Naive thymus-derived CD4-positive, alpha-beta T cell (primary cell): ENCODE measurements at regions of chr2 and their contacts with region 1.

Region 1: DNA sequence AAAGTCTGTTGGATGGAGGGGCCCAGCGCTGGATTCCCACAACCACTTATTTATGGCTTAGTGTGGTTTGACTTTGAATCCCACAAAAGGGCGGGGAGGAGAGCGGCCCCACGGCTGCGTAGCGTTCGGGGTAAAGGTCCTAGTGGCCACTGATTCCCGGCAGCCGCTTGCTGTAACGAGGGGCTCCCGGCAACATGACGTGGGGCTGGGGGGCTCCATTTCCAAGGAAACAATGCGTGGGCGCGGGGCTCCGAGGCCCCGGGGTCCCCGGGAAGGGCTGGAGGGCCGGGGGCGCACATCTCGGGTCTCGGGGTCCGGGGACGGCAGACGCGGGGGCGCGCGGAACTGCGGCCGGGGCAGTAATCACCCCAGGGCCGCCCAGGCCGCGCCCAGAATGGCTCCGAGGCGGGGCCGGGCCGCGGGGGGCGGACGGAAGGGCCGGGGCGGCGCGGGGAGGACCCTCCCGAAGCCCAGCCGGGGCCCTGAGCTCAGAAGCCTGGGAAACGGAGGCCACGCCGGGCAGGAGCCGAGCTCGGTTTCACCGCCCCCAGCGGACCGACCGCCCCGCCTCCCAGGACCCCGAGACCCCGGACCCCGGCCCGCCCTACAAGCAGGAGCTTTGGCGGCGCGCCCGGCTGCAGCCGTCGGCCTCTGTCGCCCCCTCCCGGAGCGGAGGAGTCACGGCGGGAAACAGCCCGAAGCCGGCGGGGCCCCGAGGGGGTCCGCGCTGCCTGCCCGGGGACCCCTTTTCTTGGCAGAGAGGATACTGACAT is 11.9 kb upstream of the MLPH start:
- DNase-seq: peak; percentile 48 to 85 (median 75)
- ATAC-seq: peak; percentile 89
- H3K4me3 ChIP-seq: peak overlapping the region; percentile 71
- H3K4me3 Mint-ChIP-seq: peak overlapping the region; percentile 84 to 92 (median 87)
- H3K27ac ChIP-seq: peak overlapping the region; percentile 77
- H3K27ac Mint-ChIP-seq: peak overlapping the region; percentile 81 to 92 (median 87)
- H3K4me1 ChIP-seq: peaks cover 5 to 11% of the 10 kb centered on the region in 2 donors
- H3K4me1 Mint-ChIP-seq: peaks cover 7 to 22% (median 16%) of the 10 kb centered on the region in 7 donors
- H3K27me3 ChIP-seq: no peaks in the 10 kb centered on the region
- H3K27me3 Mint-ChIP-seq: peaks cover 11 to 29% (median 15%) of the 10 kb centered on the region in 5 donors

Region 2: GRCh38 chr2:237122214-237122666 is 352.9 kb before region 1 on chr2:
- CTCF ChIA-PET with region 1: no interaction called
- POLR2A ChIA-PET with region 1: no interaction called
- intact Hi-C with region 1: loop called in 1 of 2 experiments (anchors 1 kb)
- DNase-seq: peak in 6 of 9 donors; percentile 4 to 58 (median 12)
- ATAC-seq: peak; percentile 76
- H3K4me3 ChIP-seq: no peak overlapping the region
- H3K4me3 Mint-ChIP-seq: no peak overlapping the region
- H3K27ac ChIP-seq: no peak overlapping the region
- H3K27ac Mint-ChIP-seq: no peak overlapping the region
- H3K4me1 ChIP-seq: no peaks in the 10 kb centered on the region
- H3K4me1 Mint-ChIP-seq: peaks cover 0 to 3% (median 0%) of the 10 kb centered on the region in 7 donors
- H3K27me3 ChIP-seq: no peaks in the 10 kb centered on the region
- H3K27me3 Mint-ChIP-seq: peaks cover 0 to 4% (median 0%) of the 10 kb centered on the region in 5 donors

Region 3: GRCh38 chr2:237421542-237422116 is 53.5 kb before region 1 on chr2:
- CTCF ChIA-PET with region 1: interaction called, 147 read pairs
- POLR2A ChIA-PET with region 1: interaction called, 35 read pairs
- intact Hi-C with region 1: loop called (anchors 1 kb)
- DNase-seq: peak; percentile 57 to 81 (median 71)
- ATAC-seq: peak; percentile 91
- H3K4me3 ChIP-seq: peak overlapping the region; percentile 34
- H3K4me3 Mint-ChIP-seq: peak overlapping the region; percentile 51 to 77 (median 67)
- H3K27ac ChIP-seq: no peak overlapping the region
- H3K27ac Mint-ChIP-seq: peak overlapping the region in 7 of 9 donors; percentile 36 to 81 (median 70)
- H3K4me1 ChIP-seq: peaks cover 9% of the 10 kb centered on the region in 2 donors
- H3K4me1 Mint-ChIP-seq: peaks cover 11 to 58% (median 50%) of the 10 kb centered on the region in 7 donors
- H3K27me3 ChIP-seq: no peaks in the 10 kb centered on the region
- H3K27me3 Mint-ChIP-seq: peaks cover 0 to 11% (median 0%) of the 10 kb centered on the region in 5 donors

Region 4: DNA sequence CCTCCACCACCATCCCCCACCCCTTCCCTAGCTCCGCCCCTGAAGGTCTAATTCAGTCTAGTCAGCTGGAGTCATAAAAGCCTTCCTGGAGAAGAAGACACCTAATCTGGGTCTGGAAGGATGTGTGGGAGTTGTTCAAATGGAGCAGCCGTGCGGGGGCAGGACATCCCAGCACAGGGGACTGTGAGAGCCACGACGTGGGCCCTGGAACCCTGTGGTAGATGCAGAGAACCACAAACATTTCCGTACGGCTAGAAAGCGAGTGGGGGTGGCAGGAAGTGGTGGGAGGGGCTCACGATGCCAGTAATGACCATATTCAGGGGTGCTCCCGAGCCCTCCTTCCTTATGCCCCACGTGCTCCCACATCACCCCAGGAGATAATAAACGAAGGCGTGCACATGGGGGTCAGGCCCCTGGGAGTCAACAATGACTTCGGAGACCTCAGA is 40.2 kb before region 1 on chr2:
- CTCF ChIA-PET with region 1: interaction called, 31 read pairs
- POLR2A ChIA-PET with region 1: interaction called, 26 read pairs
- intact Hi-C with region 1: loop called in 1 of 2 experiments (anchors 2 kb)
- DNase-seq: peak; percentile 29 to 85 (median 71)
- ATAC-seq: peak; percentile 83
- H3K4me3 ChIP-seq: peak overlapping the region; percentile 44
- H3K4me3 Mint-ChIP-seq: peak overlapping the region; percentile 60 to 89 (median 81)
- H3K27ac ChIP-seq: peak overlapping the region; percentile 64
- H3K27ac Mint-ChIP-seq: peak overlapping the region; percentile 84 to 100 (median 95)
- H3K4me1 ChIP-seq: peaks cover 35 to 84% of the 10 kb centered on the region in 2 donors
- H3K4me1 Mint-ChIP-seq: peaks cover 53 to 94% (median 91%) of the 10 kb centered on the region in 7 donors
- H3K27me3 ChIP-seq: no peaks in the 10 kb centered on the region
- H3K27me3 Mint-ChIP-seq: no peaks in the 10 kb centered on the region